A673 (cell line): ENCODE measurements at regions of chr11 and their contacts with region 1.

Region 1: GRCh38 chr11:16347928-16348685 is 8.2 kb downstream of the SOX6 start:
- DNase-seq: peak; percentile 49
- H3K4me3 ChIP-seq: no peak overlapping the region
- H3K27ac ChIP-seq: peak overlapping the region; percentile 80
- H3K4me1 ChIP-seq: peaks cover 78% of the 10 kb centered on the region
- H3K27me3 ChIP-seq: no peaks in the 10 kb centered on the region
- CTCF ChIP-seq: no peak

Region 2: GRCh38 chr11:16015741-16016467 is 332.2 kb before region 1 on chr11:
- CTCF ChIA-PET with region 1: no interaction called
- POLR2A ChIA-PET with region 1: no interaction called
- intact Hi-C with region 1: loop called (anchors 2 kb)
- DNase-seq: no peak
- H3K4me3 ChIP-seq: no peak overlapping the region
- H3K27ac ChIP-seq: no peak overlapping the region
- H3K4me1 ChIP-seq: peaks cover 47% of the 10 kb centered on the region
- H3K27me3 ChIP-seq: no peaks in the 10 kb centered on the region
- CTCF ChIP-seq: no peak

Region 3: DNA sequence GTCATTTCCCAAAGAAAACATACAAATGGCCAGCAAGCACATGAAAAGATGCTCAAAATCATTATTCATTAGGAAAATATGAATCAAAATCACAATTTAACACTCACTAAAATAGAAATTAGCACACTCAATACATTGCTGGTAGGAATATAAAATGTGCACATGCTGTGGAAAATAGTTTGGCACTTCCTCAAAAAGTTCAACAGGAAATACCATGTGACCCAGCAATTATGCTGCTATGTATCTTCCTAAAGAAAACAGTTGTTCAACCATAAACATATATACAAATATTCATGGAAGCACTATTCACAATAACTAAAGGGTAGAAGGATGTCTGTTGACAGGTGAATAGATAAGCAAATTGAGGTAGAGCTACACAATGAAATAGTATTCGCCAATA is 195.5 kb after region 1 on chr11:
- CTCF ChIA-PET with region 1: no interaction called
- POLR2A ChIA-PET with region 1: no interaction called
- intact Hi-C with region 1: no loop called
- DNase-seq: peak; percentile 33
- H3K4me3 ChIP-seq: no peak overlapping the region
- H3K27ac ChIP-seq: no peak overlapping the region
- H3K4me1 ChIP-seq: no peaks in the 10 kb centered on the region
- H3K27me3 ChIP-seq: no peaks in the 10 kb centered on the region
- CTCF ChIP-seq: no peak